ENCODE measurements at regions of chr1 and their contacts with region 1.

Region 1: GRCh38 chr1:20661207-20662109 is at the start of gene DDOST:
- DNase-seq: peak; percentile 94
- H3K4me3 Mint-ChIP-seq: peak within 1 kb of the TSS; percentile 97
- H3K27ac Mint-ChIP-seq: peak within 1 kb of the TSS; percentile 97
- H3K4me1 Mint-ChIP-seq: peaks cover 45% of the 10 kb centered on the region
- H3K27me3 Mint-ChIP-seq: no peaks in the 10 kb centered on the region
- total RNA-seq, gene DDOST: 167 and 174 TPM in 2 replicates

Region 2: DNA sequence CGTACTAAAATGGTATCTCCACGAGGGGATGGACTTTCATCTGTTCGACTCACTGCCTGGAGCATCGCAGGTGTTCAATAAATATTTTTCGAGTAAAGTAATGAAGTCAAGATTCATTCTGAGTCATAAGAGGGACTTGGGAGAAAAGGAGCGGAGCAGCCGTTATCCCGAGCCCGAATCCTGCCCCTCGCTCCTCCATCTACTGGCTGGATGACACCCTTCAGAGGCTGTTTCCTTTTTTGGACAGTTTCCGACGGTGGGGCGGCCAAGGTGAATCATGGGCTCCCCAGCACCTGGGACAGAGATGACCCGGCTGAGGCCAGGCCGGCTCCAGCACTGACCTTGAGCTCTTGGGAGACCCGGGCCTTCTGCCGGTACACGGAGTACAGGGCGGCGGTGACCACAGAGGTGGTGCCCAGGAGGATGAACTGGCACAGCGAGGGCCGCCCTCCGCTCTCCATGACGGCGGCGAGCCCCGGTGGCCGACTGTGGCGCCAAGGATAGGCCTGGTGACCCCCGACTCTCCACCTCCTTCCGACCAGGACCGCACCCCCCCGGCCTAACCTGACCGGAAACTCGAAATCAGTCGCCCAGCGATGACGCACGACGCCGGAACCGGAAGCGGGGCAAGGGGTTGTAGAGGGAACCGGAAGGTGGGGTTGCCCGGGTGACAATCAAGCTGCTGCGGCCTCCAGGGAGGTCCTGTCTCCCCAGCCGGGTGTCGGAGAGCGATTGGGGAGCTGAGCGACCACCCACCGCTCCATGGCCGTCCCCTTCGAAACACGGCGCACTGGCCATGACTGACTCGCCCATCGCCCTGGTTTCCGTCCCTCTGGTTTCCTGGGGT is 153.7 kb before region 1 on chr1 and contains the start of gene MUL1:
- intact Hi-C with region 1: loop called (anchors 1 kb)
- DNase-seq: peak; percentile 91
- H3K4me3 Mint-ChIP-seq: peak within 1 kb of the TSS; percentile 93
- H3K27ac Mint-ChIP-seq: peak within 1 kb of the TSS; percentile 93
- H3K4me1 Mint-ChIP-seq: peaks cover 11% of the 10 kb centered on the region
- H3K27me3 Mint-ChIP-seq: peaks cover 4% of the 10 kb centered on the region
- total RNA-seq, gene MUL1: 22.0 and 22.8 TPM in 2 replicates

Region 3: GRCh38 chr1:20640183-20640597 is 21.3 kb before region 1 on chr1:
- intact Hi-C with region 1: loop called (anchors 2 kb)
- DNase-seq: peak; percentile 45
- H3K4me3 Mint-ChIP-seq: no peak overlapping the region
- H3K27ac Mint-ChIP-seq: no peak overlapping the region
- H3K4me1 Mint-ChIP-seq: no peaks in the 10 kb centered on the region
- H3K27me3 Mint-ChIP-seq: no peaks in the 10 kb centered on the region

Region 4: DNA sequence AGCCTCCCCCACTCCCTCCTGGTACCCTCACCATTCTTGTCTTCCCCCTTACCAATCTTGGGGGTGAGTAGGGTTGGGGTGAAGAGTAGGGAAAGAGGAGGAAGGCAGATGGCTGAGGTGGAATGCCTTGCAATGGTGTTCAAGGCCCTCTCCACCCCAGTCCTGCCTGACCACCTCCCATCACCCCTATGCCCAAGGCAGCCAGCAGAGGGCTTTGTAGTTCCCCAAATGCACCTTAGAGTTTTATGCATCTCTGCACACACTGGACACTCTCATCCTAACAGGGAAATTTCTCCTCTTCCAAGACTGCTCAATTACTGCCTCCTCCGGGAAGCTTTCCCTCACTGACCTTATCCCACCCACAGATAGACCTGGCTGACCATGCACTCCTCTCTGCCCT is 41.0 kb after region 1 on chr1:
- intact Hi-C with region 1: no loop called
- DNase-seq: no peak
- H3K4me3 Mint-ChIP-seq: no peak overlapping the region
- H3K27ac Mint-ChIP-seq: no peak overlapping the region
- H3K4me1 Mint-ChIP-seq: no peaks in the 10 kb centered on the region
- H3K27me3 Mint-ChIP-seq: no peaks in the 10 kb centered on the region

Region 5: DNA sequence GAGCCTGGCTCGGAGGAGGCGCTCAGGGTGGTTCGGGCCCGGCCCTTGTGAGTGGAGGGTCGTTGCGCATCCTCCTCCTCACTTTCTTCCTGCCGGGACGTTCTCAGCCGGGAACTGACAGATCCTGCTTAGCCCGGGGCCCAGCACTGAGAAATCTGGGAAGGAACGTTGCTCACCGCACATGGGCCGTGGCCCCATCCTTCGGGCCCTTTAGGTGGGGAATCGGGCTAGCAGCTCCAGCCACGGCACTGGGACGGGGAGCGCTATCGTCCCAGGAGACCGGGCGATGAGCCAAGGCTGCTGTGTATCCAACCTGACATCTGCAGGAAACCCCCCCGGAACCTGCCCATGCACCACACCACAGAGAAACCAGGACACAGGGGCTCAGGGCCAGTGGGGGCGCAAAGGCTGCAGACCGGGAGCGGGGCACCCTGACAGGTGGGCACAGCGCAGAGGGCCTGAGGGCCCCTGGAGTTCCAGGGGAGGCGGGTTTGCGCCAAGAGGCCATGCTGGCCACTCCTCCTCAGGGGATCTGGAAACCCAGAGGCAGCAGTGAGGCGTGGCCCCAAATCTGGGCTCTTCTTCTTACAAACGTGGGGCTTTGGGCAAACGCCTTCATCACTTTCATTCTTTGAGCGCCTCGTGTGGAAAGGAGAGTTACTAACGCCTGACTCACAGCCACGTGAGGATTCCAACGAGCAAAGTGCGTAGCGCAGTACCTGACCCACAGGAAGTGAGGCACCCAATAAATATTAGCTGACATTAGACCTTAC is 71.3 kb after region 1 on chr1 and contains the start of gene SH2D5:
- intact Hi-C with region 1: loop called (anchors 2 kb)
- DNase-seq: peak; percentile 57
- H3K4me3 Mint-ChIP-seq: peak within 1 kb of the TSS; percentile 86
- H3K27ac Mint-ChIP-seq: peak within 1 kb of the TSS; percentile 67
- H3K4me1 Mint-ChIP-seq: peaks cover 17% of the 10 kb centered on the region
- H3K27me3 Mint-ChIP-seq: peaks cover 29% of the 10 kb centered on the region
- total RNA-seq, gene SH2D5: 0.08 and 0.15 TPM in 2 replicates

Region 6: GRCh38 chr1:22451702-22452474 is 1790.4 kb after region 1 on chr1 and contains the start of gene ZBTB40:
- intact Hi-C with region 1: loop called (anchors 10 kb)
- DNase-seq: peak; percentile 92
- H3K4me3 Mint-ChIP-seq: peak within 1 kb of the TSS; percentile 96
- H3K27ac Mint-ChIP-seq: peak within 1 kb of the TSS; percentile 95
- H3K4me1 Mint-ChIP-seq: peaks cover 23% of the 10 kb centered on the region
- H3K27me3 Mint-ChIP-seq: peaks cover 2% of the 10 kb centered on the region
- total RNA-seq, gene ZBTB40: 19.5 and 20.0 TPM in 2 replicates